ENCODE measurements at regions of chr10 and their contacts with region 1.

Region 1: DNA sequence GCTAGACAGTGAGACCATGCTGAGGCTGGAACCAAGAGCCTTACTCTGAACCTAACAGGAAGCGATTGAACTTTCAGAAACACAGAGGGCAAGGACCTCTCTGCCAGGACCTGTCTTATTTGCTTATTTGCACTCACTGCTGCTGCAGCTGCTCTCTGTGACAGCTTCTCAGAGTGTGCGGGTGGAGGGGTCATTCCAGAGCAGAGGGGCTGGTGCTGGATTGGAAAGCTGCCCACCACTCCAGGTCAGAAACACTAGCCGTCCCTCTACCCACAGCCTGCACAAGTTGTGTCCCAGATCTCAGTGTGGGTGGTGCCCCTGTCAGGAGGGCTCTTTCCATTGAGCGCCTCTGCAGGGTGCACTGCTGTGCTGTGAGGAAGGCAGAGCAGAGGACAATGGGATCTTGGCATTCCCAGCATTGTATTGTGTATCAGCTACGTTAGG is 126.2 kb downstream of the CCNY start:
- DNase-seq: peak in 1 of 9 donors; percentile 25
- ATAC-seq: peak; percentile 28
- H3K4me3 ChIP-seq: no peak overlapping the region
- H3K4me3 Mint-ChIP-seq: peak overlapping the region in 8 of 10 donors; percentile 21 to 69 (median 57)
- H3K27ac ChIP-seq: peak overlapping the region; percentile 32
- H3K27ac Mint-ChIP-seq: peak overlapping the region in 6 of 9 donors; percentile 56 to 90 (median 69)
- H3K4me1 ChIP-seq: peaks cover 17 to 94% of the 10 kb centered on the region in 2 donors
- H3K4me1 Mint-ChIP-seq: peaks cover 5 to 54% (median 7%) of the 10 kb centered on the region in 7 donors
- H3K27me3 ChIP-seq: no peaks in the 10 kb centered on the region
- H3K27me3 Mint-ChIP-seq: no peaks in the 10 kb centered on the region

Region 2: GRCh38 chr10:35412900-35413491 is 49.5 kb before region 1 on chr10:
- CTCF ChIA-PET with region 1: interaction called, 3 read pairs
- POLR2A ChIA-PET with region 1: interaction called, 3 read pairs
- intact Hi-C with region 1: loop called in 1 of 2 experiments (anchors 2 kb)
- DNase-seq: no peak
- ATAC-seq: peak; percentile 23
- H3K4me3 ChIP-seq: no peak overlapping the region
- H3K4me3 Mint-ChIP-seq: no peak overlapping the region
- H3K27ac ChIP-seq: no peak overlapping the region
- H3K27ac Mint-ChIP-seq: no peak overlapping the region
- H3K4me1 ChIP-seq: peaks cover 0 to 33% of the 10 kb centered on the region in 2 donors
- H3K4me1 Mint-ChIP-seq: peaks cover 0 to 70% (median 20%) of the 10 kb centered on the region in 7 donors
- H3K27me3 ChIP-seq: no peaks in the 10 kb centered on the region
- H3K27me3 Mint-ChIP-seq: no peaks in the 10 kb centered on the region

Region 3: DNA sequence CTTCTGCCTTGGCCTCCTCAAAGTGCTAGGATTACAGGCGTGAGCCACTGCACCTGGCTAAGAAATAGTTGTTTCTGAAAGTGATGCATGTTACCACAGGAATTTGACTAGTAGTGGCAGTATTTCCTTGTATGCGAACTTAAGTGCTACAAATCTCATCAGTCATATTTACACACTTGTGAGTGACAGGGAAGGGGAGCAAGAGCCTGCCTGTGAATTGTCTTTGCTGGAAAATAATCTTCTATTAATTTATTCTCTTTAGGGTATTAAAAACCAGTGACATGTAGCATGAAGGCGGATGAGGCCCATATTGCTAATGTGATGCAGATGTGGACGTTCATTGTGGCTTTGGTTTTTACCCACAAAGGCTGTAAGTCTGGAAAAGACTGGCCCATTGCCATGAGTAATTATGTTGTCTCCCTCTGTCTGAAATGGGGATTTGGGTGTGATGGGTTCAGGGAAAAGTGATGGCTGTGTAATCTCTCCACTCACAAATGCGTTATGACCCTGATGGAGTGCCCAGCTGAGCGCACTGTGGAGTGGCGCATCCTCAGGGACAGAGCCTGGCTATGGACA is 28.6 kb before region 1 on chr10:
- CTCF ChIA-PET with region 1: interaction called, 3 read pairs
- POLR2A ChIA-PET with region 1: no interaction called
- intact Hi-C with region 1: loop called in 1 of 2 experiments (anchors 5 kb)
- DNase-seq: no peak
- ATAC-seq: no peak
- H3K4me3 ChIP-seq: no peak overlapping the region
- H3K4me3 Mint-ChIP-seq: peak overlapping the region in 1 of 10 donors; percentile 10
- H3K27ac ChIP-seq: no peak overlapping the region
- H3K27ac Mint-ChIP-seq: peak overlapping the region in 5 of 9 donors; percentile 14 to 82 (median 58)
- H3K4me1 ChIP-seq: no peaks in the 10 kb centered on the region
- H3K4me1 Mint-ChIP-seq: peaks cover 18 to 51% (median 35%) of the 10 kb centered on the region in 7 donors
- H3K27me3 ChIP-seq: no peaks in the 10 kb centered on the region
- H3K27me3 Mint-ChIP-seq: no peaks in the 10 kb centered on the region

Region 4: DNA sequence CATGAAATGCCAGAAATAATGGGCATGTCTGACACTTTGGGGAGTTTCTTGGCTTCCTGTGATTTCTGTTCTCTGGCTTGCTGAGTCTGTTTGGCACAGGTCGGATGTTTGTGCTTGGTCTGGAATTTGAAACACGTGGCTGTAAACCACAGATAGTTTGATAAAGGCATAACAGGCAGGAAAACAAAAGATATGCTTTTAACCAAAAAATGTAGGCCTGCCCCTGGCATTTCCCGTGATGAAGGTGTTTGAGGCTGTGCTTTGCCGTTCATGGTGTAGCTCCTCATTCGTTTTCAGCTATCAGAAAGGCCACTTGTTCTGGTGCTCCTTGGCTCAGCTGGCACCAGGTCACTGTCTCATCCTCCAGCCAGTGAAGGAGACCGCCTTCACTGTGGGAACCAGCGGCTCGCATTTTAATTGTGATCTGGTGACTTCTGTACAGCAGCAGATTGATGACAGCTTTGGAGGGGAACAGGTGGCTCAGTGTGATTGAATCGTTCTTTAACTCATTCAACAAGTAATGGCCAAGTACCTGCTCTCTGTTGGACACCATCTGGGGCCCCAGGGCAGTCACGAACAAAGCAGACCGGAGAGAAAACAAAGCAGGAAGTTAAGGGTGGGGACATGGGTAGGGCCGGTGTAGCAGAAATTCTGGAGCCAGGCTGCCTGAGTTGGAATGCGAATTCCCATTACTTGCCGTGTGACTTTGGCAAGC is 14.7 kb before region 1 on chr10:
- CTCF ChIA-PET with region 1: interaction called, 7 read pairs
- POLR2A ChIA-PET with region 1: interaction called, 7 read pairs
- intact Hi-C with region 1: loop called in 1 of 2 experiments (anchors 1 kb)
- DNase-seq: peak in 7 of 9 donors; percentile 57 to 80 (median 73)
- ATAC-seq: peak; percentile 78
- H3K4me3 ChIP-seq: peak overlapping the region; percentile 38
- H3K4me3 Mint-ChIP-seq: peak overlapping the region; percentile 73 to 89 (median 82)
- H3K27ac ChIP-seq: peak overlapping the region; percentile 65
- H3K27ac Mint-ChIP-seq: peak overlapping the region; percentile 91 to 99 (median 97)
- H3K4me1 ChIP-seq: peaks cover 30 to 62% of the 10 kb centered on the region in 2 donors
- H3K4me1 Mint-ChIP-seq: peaks cover 56 to 83% (median 80%) of the 10 kb centered on the region in 7 donors
- H3K27me3 ChIP-seq: no peaks in the 10 kb centered on the region
- H3K27me3 Mint-ChIP-seq: no peaks in the 10 kb centered on the region

Measured in naive thymus-derived CD4-positive, alpha-beta T cell (primary cell).